MCF 10A (cell line): ENCODE measurements at regions of chrX and their contacts with region 1.

Region 1: GRCh38 chrX:68828740-68829552 is at the start of gene EFNB1:
- DNase-seq: peak; percentile 94
- H3K4me3 Mint-ChIP-seq: peak within 1 kb of the TSS; percentile 77
- H3K27ac Mint-ChIP-seq: peak within 1 kb of the TSS; percentile 91
- H3K4me1 Mint-ChIP-seq: peaks cover 10% of the 10 kb centered on the region
- H3K27me3 Mint-ChIP-seq: peaks cover 33% of the 10 kb centered on the region
- CTCF ChIP-seq: no peak
- total RNA-seq, gene EFNB1: 38.9 and 42.9 TPM in 2 replicates

Region 2: GRCh38 chrX:68196939-68197791 is 631.8 kb before region 1 on chrX:
- CTCF ChIA-PET with region 1: no interaction called
- POLR2A ChIA-PET with region 1: no interaction called
- intact Hi-C with region 1: no loop called
- DNase-seq: peak; percentile 73
- H3K4me3 Mint-ChIP-seq: no peak overlapping the region
- H3K27ac Mint-ChIP-seq: no peak overlapping the region
- H3K4me1 Mint-ChIP-seq: no peaks in the 10 kb centered on the region
- H3K27me3 Mint-ChIP-seq: peaks cover 22% of the 10 kb centered on the region
- CTCF ChIP-seq: peak; percentile 69

Region 3: DNA sequence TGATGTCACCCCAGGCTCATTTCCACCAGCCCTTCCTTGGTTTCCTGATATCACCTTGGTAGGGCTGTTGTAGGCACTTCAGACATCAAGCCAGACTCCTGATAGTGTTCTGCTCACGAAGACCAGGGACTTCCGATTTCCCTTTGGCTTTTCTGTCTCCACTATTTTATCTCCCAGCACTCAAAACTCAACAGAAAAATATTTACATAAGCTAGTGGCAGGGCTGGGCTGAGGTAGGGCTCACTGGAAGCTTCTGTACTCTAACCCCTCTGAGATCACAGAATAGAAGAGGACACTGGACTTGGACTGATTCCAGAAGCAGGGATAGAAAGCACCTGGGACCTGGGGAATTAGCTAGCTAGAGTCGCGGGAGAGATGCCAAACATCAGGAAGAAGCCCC is 34.5 kb before region 1 on chrX:
- CTCF ChIA-PET with region 1: no interaction called
- POLR2A ChIA-PET with region 1: no interaction called
- intact Hi-C with region 1: no loop called
- DNase-seq: no peak
- H3K4me3 Mint-ChIP-seq: no peak overlapping the region
- H3K27ac Mint-ChIP-seq: no peak overlapping the region
- H3K4me1 Mint-ChIP-seq: no peaks in the 10 kb centered on the region
- H3K27me3 Mint-ChIP-seq: peaks cover 85% of the 10 kb centered on the region
- CTCF ChIP-seq: no peak

Region 4: GRCh38 chrX:68929332-68930150 is 100.6 kb after region 1 on chrX:
- CTCF ChIA-PET with region 1: interaction called, 3 read pairs
- POLR2A ChIA-PET with region 1: interaction called, 4 read pairs
- intact Hi-C with region 1: loop called (anchors 10 kb)
- DNase-seq: peak; percentile 88
- H3K4me3 Mint-ChIP-seq: no peak overlapping the region
- H3K27ac Mint-ChIP-seq: no peak overlapping the region
- H3K4me1 Mint-ChIP-seq: peaks cover 5% of the 10 kb centered on the region
- H3K27me3 Mint-ChIP-seq: peaks cover 22% of the 10 kb centered on the region
- CTCF ChIP-seq: no peak

Region 5: GRCh38 chrX:69051901-69052300 is 223.0 kb after region 1 on chrX:
- CTCF ChIA-PET with region 1: interaction called, 11 read pairs
- POLR2A ChIA-PET with region 1: no interaction called
- intact Hi-C with region 1: no loop called
- DNase-seq: no peak
- H3K4me3 Mint-ChIP-seq: no peak overlapping the region
- H3K27ac Mint-ChIP-seq: no peak overlapping the region
- H3K4me1 Mint-ChIP-seq: no peaks in the 10 kb centered on the region
- H3K27me3 Mint-ChIP-seq: no peaks in the 10 kb centered on the region
- CTCF ChIP-seq: no peak

Region 6: GRCh38 chrX:69133921-69134542 is 305.1 kb after region 1 on chrX:
- CTCF ChIA-PET with region 1: interaction called, 3 read pairs
- POLR2A ChIA-PET with region 1: interaction called, 3 read pairs
- intact Hi-C with region 1: loop called (anchors 10 kb)
- DNase-seq: peak; percentile 65
- H3K4me3 Mint-ChIP-seq: no peak overlapping the region
- H3K27ac Mint-ChIP-seq: no peak overlapping the region
- H3K4me1 Mint-ChIP-seq: no peaks in the 10 kb centered on the region
- H3K27me3 Mint-ChIP-seq: peaks cover 63% of the 10 kb centered on the region
- CTCF ChIP-seq: peak; percentile 51

Region 7: DNA sequence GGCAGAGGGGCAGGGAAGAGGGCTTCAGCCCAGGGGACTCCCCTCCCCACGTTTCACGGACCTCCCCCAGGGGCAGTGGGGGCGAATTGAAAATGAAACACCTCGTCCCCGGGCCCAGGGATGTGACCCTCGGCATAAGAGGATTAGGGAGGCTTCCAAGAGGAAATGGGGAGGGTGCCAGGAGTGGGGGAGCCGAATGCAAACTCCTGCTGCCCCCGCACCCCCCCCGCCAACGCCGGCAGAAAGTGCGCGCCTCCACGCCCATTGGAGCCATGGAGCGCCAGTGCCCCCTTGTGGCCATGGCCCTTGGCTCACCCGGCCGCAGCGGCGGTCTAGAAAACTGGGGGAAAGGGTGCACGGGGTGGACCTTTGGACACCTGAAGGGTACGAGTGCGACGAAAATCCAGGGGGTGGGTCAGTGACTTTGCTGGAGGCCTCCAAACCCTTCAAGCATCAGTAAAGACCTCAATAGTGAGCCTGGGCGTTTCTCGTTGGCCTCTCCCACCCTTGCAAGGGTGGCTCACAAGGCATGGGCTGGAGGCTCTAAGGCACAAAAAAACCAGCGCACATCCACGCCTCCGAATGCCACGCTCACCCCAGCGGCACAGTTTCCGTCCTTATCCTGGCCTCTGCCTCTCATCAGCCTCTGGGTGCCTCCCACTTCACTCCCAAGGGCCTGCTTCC is 457.1 kb after region 1 on chrX:
- CTCF ChIA-PET with region 1: interaction called, 173 read pairs
- POLR2A ChIA-PET with region 1: no interaction called
- intact Hi-C with region 1: no loop called
- DNase-seq: peak; percentile 45
- H3K4me3 Mint-ChIP-seq: peak overlapping the region; percentile 60
- H3K27ac Mint-ChIP-seq: no peak overlapping the region
- H3K4me1 Mint-ChIP-seq: peaks cover 5% of the 10 kb centered on the region
- H3K27me3 Mint-ChIP-seq: peaks cover 75% of the 10 kb centered on the region
- CTCF ChIP-seq: peak; percentile 90